ENCODE measurements at regions of chr2 and their contacts with region 1.

Region 1: GRCh38 chr2:74482801-74483674 is at the starts of genes CCDC142 and TTC31:
- DNase-seq: peak; percentile 93
- CTCF ChIP-seq: peak; percentile 88

Region 2: GRCh38 chr2:74464406-74464928 is 18.6 kb before region 1 on chr2:
- CTCF ChIA-PET with region 1: interaction called, 29 read pairs
- POLR2A ChIA-PET with region 1: interaction called, 4 read pairs
- DNase-seq: no peak
- CTCF ChIP-seq: no peak

Region 3: DNA sequence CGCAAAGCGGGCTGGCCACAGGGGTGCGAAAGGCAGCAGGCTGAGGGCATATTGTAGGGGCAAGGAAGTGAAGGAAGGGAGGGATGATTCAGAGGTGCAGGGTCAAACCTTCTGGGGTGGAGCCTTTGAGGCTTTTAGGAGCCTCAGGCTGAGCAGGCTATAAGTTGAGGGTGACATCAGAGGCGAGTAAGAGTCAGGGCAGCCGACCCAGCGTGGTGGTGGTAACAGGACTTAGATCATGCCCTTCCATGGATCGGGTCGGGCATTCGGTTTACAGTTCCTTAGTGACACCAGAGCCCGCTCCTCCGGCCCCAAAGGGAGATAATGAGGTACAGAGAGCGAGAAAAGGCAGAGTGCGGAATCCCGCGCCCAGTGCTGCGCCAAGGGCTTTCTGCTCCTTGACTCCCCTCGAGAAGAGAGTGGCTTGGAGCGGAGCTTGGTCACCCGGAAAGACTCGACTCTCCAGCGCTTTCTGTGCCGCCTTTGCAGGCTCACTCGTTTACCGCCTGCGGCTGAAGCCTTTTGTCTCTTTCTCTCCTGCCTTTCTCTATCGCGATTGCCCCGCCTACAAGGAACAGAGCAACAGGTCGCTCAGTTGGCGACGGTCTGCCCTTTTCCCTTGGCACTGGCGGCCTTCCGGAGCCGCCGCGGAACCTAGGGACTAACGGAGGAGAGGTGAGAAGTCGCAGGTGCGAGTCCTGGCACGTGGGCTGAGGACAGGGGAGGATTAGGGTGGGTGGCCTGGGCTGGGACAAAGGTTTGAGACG is 15.6 kb after region 1 on chr2:
- CTCF ChIA-PET with region 1: interaction called, 11 read pairs
- POLR2A ChIA-PET with region 1: no interaction called
- DNase-seq: peak; percentile 39
- CTCF ChIP-seq: no peak

Region 4: DNA sequence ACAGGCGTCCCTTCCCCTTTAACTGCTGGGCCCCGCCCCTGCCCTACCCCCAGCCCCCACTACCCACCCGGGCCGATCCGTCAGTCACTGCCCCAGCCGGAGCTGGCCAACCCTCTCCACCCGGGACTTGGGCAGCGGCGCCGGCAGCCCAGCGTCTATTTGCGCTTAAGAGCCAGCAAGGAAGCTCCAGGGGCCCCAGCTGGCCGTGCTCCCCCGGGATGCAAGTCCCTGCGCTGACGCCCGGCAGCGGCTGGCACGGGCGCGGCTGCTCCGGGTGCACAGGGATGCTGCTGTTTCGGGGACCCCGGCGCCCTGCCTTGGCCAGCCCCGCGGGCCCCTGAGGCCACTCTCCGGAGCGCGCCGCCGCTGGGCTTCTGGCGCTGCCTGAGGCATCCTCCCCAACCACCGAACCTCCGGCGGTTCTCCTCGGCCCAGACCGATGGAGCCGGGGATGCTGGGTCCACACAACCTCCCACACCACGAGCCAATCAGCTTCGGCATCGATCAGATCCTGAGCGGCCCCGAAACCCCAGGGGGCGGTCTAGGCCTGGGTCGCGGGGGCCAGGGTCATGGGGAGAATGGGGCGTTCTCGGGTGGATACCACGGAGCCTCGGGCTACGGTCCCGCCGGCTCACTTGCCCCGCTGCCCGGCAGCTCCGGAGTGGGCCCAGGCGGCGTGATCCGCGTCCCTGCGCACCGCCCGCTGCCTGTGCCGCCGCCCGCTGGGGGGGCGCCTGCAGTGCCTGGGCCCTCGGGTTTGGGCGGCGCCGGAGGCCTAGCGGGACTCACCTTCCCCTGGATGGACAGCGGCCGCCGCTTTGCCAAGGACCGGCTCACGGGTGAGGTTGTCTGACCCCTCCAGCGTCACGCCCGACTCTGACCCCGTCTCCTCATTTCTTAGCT is 31.6 kb after region 1 on chr2 and contains the start of gene TLX2:
- CTCF ChIA-PET with region 1: interaction called, 10 read pairs
- POLR2A ChIA-PET with region 1: no interaction called
- DNase-seq: peak; percentile 31
- CTCF ChIP-seq: no peak

Region 5: GRCh38 chr2:74573747-74574562 is 90.9 kb after region 1 on chr2:
- CTCF ChIA-PET with region 1: interaction called, 19 read pairs
- POLR2A ChIA-PET with region 1: no interaction called
- DNase-seq: peak; percentile 40
- CTCF ChIP-seq: no peak